PC-3 (cell line): ENCODE measurements at regions of chr12 and their contacts with region 1.

Region 1: DNA sequence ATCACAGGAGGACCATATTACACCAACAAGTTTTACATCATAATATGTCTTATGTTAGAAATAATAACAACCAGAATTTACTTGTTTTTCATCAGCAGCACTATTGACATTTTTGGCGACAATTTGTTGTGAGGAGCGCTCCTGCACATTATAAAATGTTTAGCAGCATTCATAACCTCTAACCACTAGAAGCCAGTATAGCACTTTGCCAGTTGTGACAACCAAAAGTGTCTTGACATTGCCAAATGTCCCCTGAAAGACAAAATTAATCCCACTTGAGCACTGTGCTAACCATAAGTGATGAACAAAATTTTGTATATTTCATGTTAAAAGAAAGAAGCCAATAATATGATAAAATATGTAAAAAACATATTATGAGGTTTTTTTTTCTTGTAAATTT is 356.9 kb upstream of the LMO3 start:
- DNase-seq: peak; percentile 25
- ATAC-seq: 0 out of 2 replicates have a peak, but pooled peaks have one; percentile 29
- H3K4me3 ChIP-seq: no peak overlapping the region
- H3K27ac ChIP-seq: no peak overlapping the region
- H3K4me1 ChIP-seq: no peaks in the 10 kb centered on the region
- H3K27me3 ChIP-seq: no peaks in the 10 kb centered on the region
- CTCF ChIP-seq: peak; percentile 42

Region 2: GRCh38 chr12:17016116-17016864 is 53.4 kb after region 1 on chr12:
- CTCF ChIA-PET with region 1: no interaction called
- POLR2A ChIA-PET with region 1: no interaction called
- intact Hi-C with region 1: loop called (anchors 10 kb)
- DNase-seq: peak; percentile 80
- ATAC-seq: peak; percentile 63
- H3K4me3 ChIP-seq: peak overlapping the region; percentile 25; the same call in 1 of the 2 replicates
- H3K27ac ChIP-seq: peak overlapping the region; percentile 94
- H3K4me1 ChIP-seq: peaks cover 30% of the 10 kb centered on the region
- H3K27me3 ChIP-seq: no peaks in the 10 kb centered on the region
- CTCF ChIP-seq: no peak

Region 3: GRCh38 chr12:17056546-17056945 is 93.7 kb after region 1 on chr12:
- CTCF ChIA-PET with region 1: no interaction called
- POLR2A ChIA-PET with region 1: no interaction called
- intact Hi-C with region 1: no loop called
- DNase-seq: no peak
- ATAC-seq: no peak
- H3K4me3 ChIP-seq: no peak overlapping the region
- H3K27ac ChIP-seq: no peak overlapping the region
- H3K4me1 ChIP-seq: no peaks in the 10 kb centered on the region
- H3K27me3 ChIP-seq: no peaks in the 10 kb centered on the region
- CTCF ChIP-seq: no peak

Region 4: DNA sequence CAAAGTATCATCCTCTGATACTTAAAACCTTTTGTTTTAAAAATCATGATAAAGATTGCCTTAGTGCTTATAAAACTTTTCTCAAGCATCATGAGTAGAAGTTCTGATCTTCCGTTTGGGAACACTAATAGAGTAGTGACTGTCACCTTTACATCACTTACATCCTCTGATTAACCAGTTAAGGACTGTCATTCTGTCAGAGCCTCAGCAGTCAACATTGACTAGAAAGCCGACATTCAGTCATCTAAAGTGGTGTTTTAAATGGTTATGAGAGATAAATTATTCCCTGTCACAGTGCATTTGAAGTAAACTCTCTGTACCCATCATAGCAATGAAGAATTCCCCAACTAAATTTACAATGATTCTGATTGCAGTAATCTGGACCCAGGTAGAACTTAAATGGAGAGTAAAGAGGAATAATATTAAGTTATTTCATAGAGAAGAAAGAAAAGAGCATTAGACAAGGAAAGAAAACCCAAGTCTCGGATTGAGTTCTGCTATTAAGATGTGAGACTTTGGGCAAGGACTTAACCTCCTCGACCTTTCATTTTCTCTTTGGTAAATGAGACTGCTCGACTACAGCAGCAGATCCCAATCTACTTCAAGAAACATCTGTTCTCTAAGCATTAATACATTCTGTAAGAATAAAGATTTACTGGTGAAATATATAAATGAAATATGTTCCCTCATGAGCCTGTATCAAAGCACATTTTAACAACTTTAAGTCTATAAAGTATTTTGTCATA is 207.0 kb after region 1 on chr12:
- CTCF ChIA-PET with region 1: no interaction called
- POLR2A ChIA-PET with region 1: no interaction called
- intact Hi-C with region 1: loop called (anchors 10 kb)
- DNase-seq: no peak
- ATAC-seq: no peak
- H3K4me3 ChIP-seq: no peak overlapping the region
- H3K27ac ChIP-seq: no peak overlapping the region
- H3K4me1 ChIP-seq: no peaks in the 10 kb centered on the region
- H3K27me3 ChIP-seq: no peaks in the 10 kb centered on the region
- CTCF ChIP-seq: no peak